Naive thymus-derived CD4-positive, alpha-beta T cell (primary cell): ENCODE measurements at regions of chr15 and their contacts with region 1.

Region 1: GRCh38 chr15:28975766-28976179 is 90.0 kb downstream of the APBA2 start:
- DNase-seq: peak; percentile 45 to 82 (median 75)
- ATAC-seq: peak; percentile 89
- H3K4me3 ChIP-seq: no peak overlapping the region
- H3K4me3 Mint-ChIP-seq: peak overlapping the region in 1 of 10 donors; percentile 9
- H3K27ac ChIP-seq: no peak overlapping the region
- H3K27ac Mint-ChIP-seq: peak overlapping the region in 5 of 9 donors; percentile 5 to 82 (median 40)
- H3K4me1 ChIP-seq: peaks cover 0 to 8% of the 10 kb centered on the region in 2 donors
- H3K4me1 Mint-ChIP-seq: peaks cover 4 to 74% (median 70%) of the 10 kb centered on the region in 7 donors
- H3K27me3 ChIP-seq: no peaks in the 10 kb centered on the region
- H3K27me3 Mint-ChIP-seq: peaks cover 0 to 15% (median 0%) of the 10 kb centered on the region in 5 donors

Region 2: DNA sequence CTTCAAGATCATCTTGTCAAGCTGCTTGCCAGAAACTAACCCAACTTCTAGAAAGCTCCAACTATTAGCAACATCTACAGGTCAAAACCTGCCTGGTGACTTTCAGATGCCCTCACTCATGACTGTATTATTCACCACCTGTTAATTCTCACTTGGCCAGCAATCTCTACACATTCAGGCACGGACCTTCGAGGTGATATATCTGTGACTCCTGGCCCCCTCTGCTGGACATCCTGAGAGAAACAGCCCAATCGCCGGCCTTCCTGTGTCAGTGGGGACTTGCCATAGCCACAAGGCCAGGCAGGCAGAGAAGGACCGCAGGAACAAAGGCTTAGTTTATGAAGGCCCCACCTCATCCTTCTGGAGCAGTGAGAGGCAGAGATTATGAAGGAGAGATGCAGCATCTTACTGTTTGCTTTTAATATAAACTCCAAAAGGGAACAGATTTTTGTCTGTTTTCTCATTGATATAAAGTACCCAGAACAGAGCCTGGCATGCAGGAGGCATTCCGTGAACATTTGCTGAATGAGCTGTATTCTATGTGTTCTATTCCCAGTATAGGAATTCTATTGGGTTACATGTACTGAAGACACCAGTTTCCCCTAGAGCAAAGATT is 852.3 kb before region 1 on chr15:
- CTCF ChIA-PET with region 1: no interaction called
- POLR2A ChIA-PET with region 1: no interaction called
- intact Hi-C with region 1: loop called in 1 of 2 experiments (anchors 10 kb)
- DNase-seq: peak in 1 of 9 donors; percentile 33
- ATAC-seq: peak; percentile 62
- H3K4me3 ChIP-seq: no peak overlapping the region
- H3K4me3 Mint-ChIP-seq: no peak overlapping the region
- H3K27ac ChIP-seq: no peak overlapping the region
- H3K27ac Mint-ChIP-seq: peak overlapping the region in 1 of 9 donors; percentile 15
- H3K4me1 ChIP-seq: no peaks in the 10 kb centered on the region
- H3K4me1 Mint-ChIP-seq: peaks cover 0 to 23% (median 12%) of the 10 kb centered on the region in 7 donors
- H3K27me3 ChIP-seq: no peaks in the 10 kb centered on the region
- H3K27me3 Mint-ChIP-seq: no peaks in the 10 kb centered on the region

Region 3: GRCh38 chr15:28873541-28874190 is 102.1 kb before region 1 on chr15:
- CTCF ChIA-PET with region 1: interaction called, 31 read pairs
- POLR2A ChIA-PET with region 1: interaction called, 9 read pairs
- intact Hi-C with region 1: loop called in 1 of 2 experiments (anchors 1 kb)
- DNase-seq: peak in 7 of 9 donors; percentile 53 to 71 (median 58)
- ATAC-seq: peak; percentile 79
- H3K4me3 ChIP-seq: no peak overlapping the region
- H3K4me3 Mint-ChIP-seq: no peak overlapping the region
- H3K27ac ChIP-seq: no peak overlapping the region
- H3K27ac Mint-ChIP-seq: peak overlapping the region in 3 of 9 donors; percentile 28 to 70 (median 36)
- H3K4me1 ChIP-seq: peaks cover 0 to 9% of the 10 kb centered on the region in 2 donors
- H3K4me1 Mint-ChIP-seq: peaks cover 0 to 32% (median 22%) of the 10 kb centered on the region in 7 donors
- H3K27me3 ChIP-seq: no peaks in the 10 kb centered on the region
- H3K27me3 Mint-ChIP-seq: no peaks in the 10 kb centered on the region

Region 4: GRCh38 chr15:28935326-28935725 is 40.4 kb before region 1 on chr15:
- CTCF ChIA-PET with region 1: interaction called, 7 read pairs
- POLR2A ChIA-PET with region 1: interaction called, 3 read pairs
- intact Hi-C with region 1: loop called (anchors 1 to 2 kb)
- DNase-seq: peak in 7 of 9 donors; percentile 22 to 50 (median 42)
- ATAC-seq: peak; percentile 55
- H3K4me3 ChIP-seq: no peak overlapping the region
- H3K4me3 Mint-ChIP-seq: peak overlapping the region in 9 of 10 donors; percentile 43 to 88 (median 76)
- H3K27ac ChIP-seq: peak overlapping the region; percentile 20
- H3K27ac Mint-ChIP-seq: peak overlapping the region in 8 of 9 donors; percentile 85 to 98 (median 96)
- H3K4me1 ChIP-seq: peaks cover 30 to 67% of the 10 kb centered on the region in 2 donors
- H3K4me1 Mint-ChIP-seq: peaks cover 20 to 85% (median 77%) of the 10 kb centered on the region in 7 donors
- H3K27me3 ChIP-seq: no peaks in the 10 kb centered on the region
- H3K27me3 Mint-ChIP-seq: peaks cover 0 to 3% (median 0%) of the 10 kb centered on the region in 5 donors

Region 5: GRCh38 chr15:29090617-29091466 is 115.1 kb after region 1 on chr15:
- CTCF ChIA-PET with region 1: no interaction called
- POLR2A ChIA-PET with region 1: no interaction called
- intact Hi-C with region 1: loop called in 1 of 2 experiments (anchors 1 kb)
- DNase-seq: peak in 7 of 9 donors; percentile 34 to 55 (median 44)
- ATAC-seq: peak; percentile 67
- H3K4me3 ChIP-seq: peak overlapping the region; percentile 34
- H3K4me3 Mint-ChIP-seq: peak overlapping the region in 2 of 10 donors; percentile 59 to 70
- H3K27ac ChIP-seq: no peak overlapping the region
- H3K27ac Mint-ChIP-seq: peak overlapping the region in 6 of 9 donors; percentile 14 to 85 (median 54)
- H3K4me1 ChIP-seq: peaks cover 12 to 17% of the 10 kb centered on the region in 2 donors
- H3K4me1 Mint-ChIP-seq: peaks cover 13 to 51% (median 38%) of the 10 kb centered on the region in 7 donors
- H3K27me3 ChIP-seq: no peaks in the 10 kb centered on the region
- H3K27me3 Mint-ChIP-seq: no peaks in the 10 kb centered on the region